ENCODE measurements at regions of chr18 and their contacts with region 1.

Region 1: DNA sequence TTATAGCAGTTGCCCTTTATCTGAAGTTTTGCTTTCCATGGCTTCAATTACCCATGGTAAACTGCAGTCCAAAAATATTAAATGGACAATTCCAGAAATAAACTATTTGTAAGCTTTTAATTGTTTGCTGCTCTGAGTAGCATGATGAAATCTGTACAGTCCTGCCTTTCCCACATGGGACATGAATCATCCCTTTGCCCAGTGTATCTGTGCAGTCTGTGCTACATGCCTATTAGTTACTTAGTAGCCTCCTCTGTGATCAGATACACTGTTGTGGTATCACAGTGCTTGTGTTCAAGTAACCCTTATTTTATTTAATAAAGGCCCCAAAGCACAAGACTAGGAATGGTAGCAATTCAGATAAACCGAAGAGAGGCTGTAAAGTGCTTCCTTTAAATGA is 810.6 kb upstream of the PIK3C3 start:
- DNase-seq: peak; percentile 75
- H3K4me3 Mint-ChIP-seq: no peak overlapping the region
- H3K27ac Mint-ChIP-seq: peak overlapping the region; percentile 13
- H3K4me1 Mint-ChIP-seq: peaks cover 10% of the 10 kb centered on the region
- H3K27me3 Mint-ChIP-seq: no peaks in the 10 kb centered on the region
- CTCF ChIP-seq: no peak

Region 2: GRCh38 chr18:40782453-40783130 is 361.8 kb before region 1 on chr18:
- CTCF ChIA-PET with region 1: no interaction called
- POLR2A ChIA-PET with region 1: no interaction called
- intact Hi-C with region 1: no loop called
- DNase-seq: no peak
- H3K4me3 Mint-ChIP-seq: no peak overlapping the region
- H3K27ac Mint-ChIP-seq: no peak overlapping the region
- H3K4me1 Mint-ChIP-seq: no peaks in the 10 kb centered on the region
- H3K27me3 Mint-ChIP-seq: no peaks in the 10 kb centered on the region
- CTCF ChIP-seq: no peak

Region 3: DNA sequence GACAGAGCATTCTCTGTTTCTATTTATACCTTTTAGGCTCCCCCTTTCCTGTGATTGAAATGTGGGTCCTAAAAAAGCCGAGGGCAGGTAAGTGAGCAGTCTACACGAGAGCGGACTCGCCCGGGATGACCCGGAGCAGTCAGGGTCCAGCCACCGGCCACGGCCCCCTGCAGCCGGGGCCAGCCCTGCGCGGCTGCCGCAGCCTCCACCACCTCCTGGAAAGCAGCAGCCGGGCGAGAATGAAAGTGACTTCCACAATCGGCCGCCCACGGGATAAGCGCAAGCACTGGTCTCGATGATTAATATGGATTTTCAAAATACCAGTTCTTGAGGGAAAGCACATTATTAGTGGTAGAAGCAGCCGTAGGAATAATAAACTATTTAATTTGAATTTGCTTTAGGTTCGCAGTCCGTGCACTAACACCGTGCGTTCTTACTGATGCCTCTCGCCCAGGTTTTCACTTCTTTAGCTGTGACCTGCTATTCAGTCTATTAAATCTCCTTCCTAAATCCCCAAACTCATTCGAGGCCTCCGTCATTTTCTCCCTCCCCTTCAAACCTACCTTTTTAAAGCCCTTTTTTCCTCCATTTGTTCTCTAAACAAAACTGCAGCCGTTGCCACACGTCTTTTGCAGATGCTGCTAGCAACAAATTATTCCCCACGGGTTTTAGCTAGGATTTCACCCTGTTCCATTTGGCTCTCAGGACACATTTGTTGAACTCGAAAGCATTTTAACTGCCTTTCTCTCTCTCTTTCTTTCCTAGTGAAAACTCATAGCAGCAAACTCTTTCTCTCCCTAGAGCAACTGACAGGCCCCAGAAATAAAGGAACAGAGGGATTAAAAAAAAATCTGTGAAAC is 204.6 kb before region 1 on chr18:
- CTCF ChIA-PET with region 1: no interaction called
- POLR2A ChIA-PET with region 1: no interaction called
- intact Hi-C with region 1: no loop called
- DNase-seq: no peak
- H3K4me3 Mint-ChIP-seq: no peak overlapping the region
- H3K27ac Mint-ChIP-seq: no peak overlapping the region
- H3K4me1 Mint-ChIP-seq: no peaks in the 10 kb centered on the region
- H3K27me3 Mint-ChIP-seq: no peaks in the 10 kb centered on the region
- CTCF ChIP-seq: no peak

Region 4: DNA sequence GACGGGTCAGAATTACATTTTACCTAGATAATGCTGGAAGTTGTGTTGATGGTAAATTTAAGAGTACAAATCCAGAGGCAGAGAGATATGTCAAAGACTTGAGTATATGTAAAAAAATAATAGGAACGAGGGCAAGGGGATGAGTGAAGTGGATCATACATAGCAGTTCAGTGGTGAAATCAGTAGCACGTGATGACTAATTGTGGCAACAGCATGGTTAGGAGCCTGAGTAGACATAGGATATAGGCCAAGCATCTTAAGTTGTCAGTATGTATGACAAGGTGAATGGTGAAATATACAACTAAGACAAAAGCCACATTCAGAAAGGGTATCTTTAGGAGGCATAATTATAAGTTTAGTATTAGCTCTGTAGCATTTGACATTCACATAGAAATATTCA is 15.9 kb before region 1 on chr18:
- CTCF ChIA-PET with region 1: no interaction called
- POLR2A ChIA-PET with region 1: no interaction called
- intact Hi-C with region 1: loop called (anchors 2 kb)
- DNase-seq: peak; percentile 59
- H3K4me3 Mint-ChIP-seq: no peak overlapping the region
- H3K27ac Mint-ChIP-seq: no peak overlapping the region
- H3K4me1 Mint-ChIP-seq: peaks cover 17% of the 10 kb centered on the region
- H3K27me3 Mint-ChIP-seq: no peaks in the 10 kb centered on the region
- CTCF ChIP-seq: no peak

Region 5: GRCh38 chr18:41311571-41312547 is 167.4 kb after region 1 on chr18:
- CTCF ChIA-PET with region 1: no interaction called
- POLR2A ChIA-PET with region 1: no interaction called
- intact Hi-C with region 1: no loop called
- DNase-seq: no peak
- H3K4me3 Mint-ChIP-seq: no peak overlapping the region
- H3K27ac Mint-ChIP-seq: no peak overlapping the region
- H3K4me1 Mint-ChIP-seq: no peaks in the 10 kb centered on the region
- H3K27me3 Mint-ChIP-seq: no peaks in the 10 kb centered on the region
- CTCF ChIP-seq: no peak

Region 6: GRCh38 chr18:41378598-41378997 is 234.2 kb after region 1 on chr18:
- CTCF ChIA-PET with region 1: interaction called, 8 read pairs
- POLR2A ChIA-PET with region 1: no interaction called
- intact Hi-C with region 1: loop called (anchors 10 kb)
- DNase-seq: peak; percentile 54
- H3K4me3 Mint-ChIP-seq: no peak overlapping the region
- H3K27ac Mint-ChIP-seq: no peak overlapping the region
- H3K4me1 Mint-ChIP-seq: no peaks in the 10 kb centered on the region
- H3K27me3 Mint-ChIP-seq: no peaks in the 10 kb centered on the region
- CTCF ChIP-seq: peak; percentile 55